ENCODE measurements at regions of chrX and their contacts with region 1.

Region 1: DNA sequence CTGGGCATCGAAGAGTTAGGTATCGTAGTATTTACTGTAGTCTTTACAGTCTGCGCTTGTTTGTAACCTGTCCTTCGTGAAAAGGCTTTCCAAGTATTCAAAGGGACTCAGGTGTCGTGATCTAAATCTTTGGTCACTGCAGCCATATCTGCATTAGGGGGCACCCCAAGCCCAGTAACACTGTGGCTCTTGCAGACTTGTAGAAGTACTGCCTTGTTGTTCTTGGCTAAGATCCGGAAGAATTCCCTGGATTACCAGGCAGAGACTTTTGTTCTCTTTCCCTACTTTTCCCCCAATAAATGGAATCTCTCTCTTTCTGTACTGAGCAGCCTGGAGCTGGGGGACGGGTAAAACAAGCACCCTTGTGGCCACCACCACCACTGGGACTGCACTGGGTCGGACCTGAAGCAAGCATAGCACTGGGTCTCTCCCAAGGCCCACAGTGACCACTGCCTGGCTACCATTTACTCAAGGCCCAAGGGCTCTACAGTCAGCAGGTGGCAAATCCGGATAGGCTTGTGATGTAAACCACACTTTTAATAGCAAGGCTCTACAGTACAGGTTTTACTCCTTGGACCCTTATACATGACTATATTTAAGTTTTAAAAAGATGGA is 12.0 kb downstream of the CXorf58 start:
- DNase-seq: peak; percentile 49 to 63
- H3K4me3 ChIP-seq: no peak overlapping the region
- H3K27ac ChIP-seq: no peak overlapping the region
- H3K4me1 ChIP-seq: no peaks in the 10 kb centered on the region
- H3K27me3 ChIP-seq: no peaks in the 10 kb centered on the region
- CTCF ChIP-seq: peak in 3 of 6 experiments; percentile 38 to 67 (median 58)
- POLR2A ChIP-seq: no peak

Region 2: DNA sequence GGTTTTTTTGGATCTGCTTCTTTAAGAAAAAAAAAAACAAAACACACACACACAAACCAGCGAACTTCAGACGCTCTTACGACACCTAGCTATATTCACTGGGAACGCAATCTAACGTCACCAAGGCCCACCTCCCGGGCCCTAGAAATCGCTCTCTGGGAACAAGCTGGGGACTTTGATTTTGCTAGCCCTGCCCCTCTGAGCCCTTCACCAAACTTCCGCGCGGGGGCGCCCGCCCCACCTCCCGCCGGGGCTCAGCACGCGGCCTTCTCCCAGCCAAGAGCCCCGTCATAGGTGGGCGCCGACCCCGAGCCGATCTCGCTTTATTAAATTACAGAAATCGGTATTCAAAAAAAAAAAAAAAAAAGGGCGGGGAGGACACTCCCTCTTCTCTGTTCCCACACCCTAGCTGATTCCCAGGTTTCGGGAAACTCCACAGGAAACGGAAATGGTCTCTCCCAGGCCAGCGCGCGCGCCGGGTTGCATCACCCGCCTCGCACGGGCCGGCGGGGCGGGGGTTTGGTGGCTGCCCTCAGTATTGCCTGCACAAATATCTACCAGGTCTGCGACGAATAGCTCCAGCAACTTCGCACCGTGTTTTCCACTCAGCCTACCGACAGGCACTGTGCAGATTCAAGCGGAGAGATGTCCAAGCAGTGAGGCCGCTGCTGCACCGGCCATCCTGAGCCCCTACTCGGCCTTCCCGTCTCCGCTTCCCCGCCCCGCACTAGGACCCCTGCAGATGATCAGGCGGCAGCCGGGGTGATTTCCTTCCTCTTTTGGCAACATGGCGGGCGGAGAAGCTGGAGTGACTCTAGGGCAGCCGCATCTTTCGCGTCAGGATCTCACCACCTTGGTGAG is 134.6 kb after region 1 on chrX and contains the start of gene EIF2S3:
- intact Hi-C with region 1: loop called (anchors 10 kb)
- DNase-seq: peak; percentile 83 to 85
- H3K4me3 ChIP-seq: peak within 1 kb of the TSS in 2 of 3 donors; percentile 65 to 70
- H3K27ac ChIP-seq: peak within 1 kb of the TSS; percentile 76 to 92 (median 78)
- H3K4me1 ChIP-seq: no peaks in the 10 kb centered on the region
- H3K27me3 ChIP-seq: no peaks in the 10 kb centered on the region
- CTCF ChIP-seq: peak; percentile 21 to 50 (median 42)
- POLR2A ChIP-seq: peak in 1 of 2 donors; percentile 36
- total RNA-seq, gene EIF2S3: 115 to 176 (median 138) TPM

Region 3: GRCh38 chrX:24259544-24260240 is 339.9 kb after region 1 on chrX:
- intact Hi-C with region 1: loop called (anchors 10 kb)
- DNase-seq: peak; percentile 9 to 25
- H3K4me3 ChIP-seq: no peak overlapping the region
- H3K27ac ChIP-seq: no peak overlapping the region
- H3K4me1 ChIP-seq: no peaks in the 10 kb centered on the region
- H3K27me3 ChIP-seq: peaks cover 4% of the 10 kb centered on the region
- CTCF ChIP-seq: peak in 4 of 6 experiments; percentile 6 to 44 (median 32)
- POLR2A ChIP-seq: no peak

Region 4: GRCh38 chrX:24561121-24561520 is 641.3 kb after region 1 on chrX:
- intact Hi-C with region 1: no loop called
- DNase-seq: no peak
- H3K4me3 ChIP-seq: no peak overlapping the region
- H3K27ac ChIP-seq: no peak overlapping the region
- H3K4me1 ChIP-seq: no peaks in the 10 kb centered on the region
- H3K27me3 ChIP-seq: no peaks in the 10 kb centered on the region
- CTCF ChIP-seq: no peak
- POLR2A ChIP-seq: no peak